A549 (cell line): ENCODE measurements at regions of chr2 and their contacts with region 1.

Region 1: GRCh38 chr2:70789304-70790135 is 923 bp downstream of the FIGLA start:
- DNase-seq: peak; percentile 78 to 85
- ATAC-seq: peak; percentile 86 to 96
- H3K4me3 ChIP-seq: peak overlapping the region; percentile 45
- H3K27ac ChIP-seq: 0 out of 6 replicates have a peak overlapping the region, but pooled peaks of 1 of the 2 experiments have one; percentile 11
- H3K4me1 ChIP-seq: peaks cover 7% of the 10 kb centered on the region; the same call in 1 of the 3 replicates
- CTCF ChIP-seq: peak; percentile 98
- EP300 ChIP-seq: no peak
- POLR2A ChIP-seq: no peak
- RAD21 ChIP-seq: peak; percentile 90 to 94

Region 2: GRCh38 chr2:70258532-70258874 is 531.0 kb before region 1 on chr2:
- CTCF ChIA-PET with region 1: no interaction called
- POLR2A ChIA-PET with region 1: no interaction called
- DNase-seq: peak in 1 of 2 experiments; percentile 34
- ATAC-seq: peak in 1 of 2 experiments; percentile 36; a peak in 5 of 6 replicates
- H3K4me3 ChIP-seq: peak overlapping the region; percentile 66
- H3K27ac ChIP-seq: peak overlapping the region; percentile 86 to 93
- H3K4me1 ChIP-seq: peaks cover 5% of the 10 kb centered on the region; the same call in 1 of the 3 replicates
- CTCF ChIP-seq: no peak
- EP300 ChIP-seq: no peak
- POLR2A ChIP-seq: no peak
- RAD21 ChIP-seq: no peak

Region 3: DNA sequence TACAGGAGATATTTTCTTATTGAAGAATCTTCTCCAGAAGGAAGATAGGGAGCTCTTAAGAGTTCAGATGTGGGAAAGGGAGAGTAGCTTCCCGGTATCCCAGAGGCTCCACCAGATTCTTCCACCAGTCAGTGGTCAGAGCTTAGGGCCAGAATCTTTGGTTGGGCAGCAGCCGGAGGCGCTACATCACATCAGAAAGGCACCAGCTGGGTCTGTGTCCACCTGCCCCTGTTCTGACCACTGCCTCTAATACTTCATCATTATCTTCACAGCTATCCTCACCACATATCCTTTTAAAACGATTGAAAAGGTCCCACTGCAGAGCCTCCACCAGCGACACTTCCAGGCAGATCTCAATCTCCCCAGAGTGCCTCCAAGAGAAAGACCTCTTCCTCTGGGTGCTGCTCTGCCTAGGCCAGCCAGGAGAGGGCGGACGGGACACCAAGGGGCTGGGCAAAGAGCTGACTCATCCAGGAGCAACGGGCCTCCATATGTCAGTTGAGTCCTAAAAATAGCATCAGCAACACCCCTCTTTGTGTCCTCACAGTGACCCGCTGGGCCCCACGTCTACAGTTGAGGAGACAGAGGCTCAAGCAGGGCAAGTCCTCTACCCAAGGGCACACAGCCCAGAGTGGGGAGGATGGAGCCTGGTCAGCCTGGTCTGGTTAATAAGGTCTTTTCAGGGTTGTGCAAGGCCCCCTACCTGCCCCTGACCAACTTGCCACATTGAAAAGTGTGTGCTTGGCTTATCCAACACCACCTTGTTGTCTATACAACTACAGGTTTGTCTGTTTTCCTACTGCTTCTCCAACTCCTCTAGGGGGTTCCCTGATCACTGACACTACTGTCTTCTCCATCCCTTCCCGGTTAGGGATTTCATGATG is 102.7 kb before region 1 on chr2:
- CTCF ChIA-PET with region 1: interaction called, 38 read pairs
- POLR2A ChIA-PET with region 1: no interaction called
- DNase-seq: peak; percentile 86 to 93
- ATAC-seq: peak; percentile 97 to 100
- H3K4me3 ChIP-seq: no peak overlapping the region
- H3K27ac ChIP-seq: peak overlapping the region; percentile 59 to 80; a peak in 5 of 6 replicates
- H3K4me1 ChIP-seq: peaks cover 7% of the 10 kb centered on the region
- CTCF ChIP-seq: peak; percentile 58
- EP300 ChIP-seq: no peak
- POLR2A ChIP-seq: no peak
- RAD21 ChIP-seq: peak; percentile 39 to 51; a peak in 3 of 5 replicates

Region 4: DNA sequence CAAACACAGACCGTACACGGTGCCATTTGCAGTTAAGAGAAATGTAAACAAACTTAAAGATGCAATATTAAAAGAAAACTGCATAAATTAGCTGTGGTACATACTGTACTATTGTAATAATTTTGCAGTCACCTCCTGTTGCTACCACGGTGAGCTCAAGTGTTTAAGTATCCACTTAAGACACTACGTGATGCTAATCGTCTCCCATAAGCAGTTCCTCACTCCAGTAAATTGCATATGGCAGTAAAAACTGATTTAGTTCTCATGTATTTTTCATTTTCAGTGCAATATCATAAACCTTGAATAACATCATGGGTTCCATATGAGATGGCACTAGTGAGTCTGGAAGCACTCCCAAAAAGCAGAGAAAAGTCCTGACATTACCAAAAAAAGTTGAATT is 16.5 kb after region 1 on chr2:
- CTCF ChIA-PET with region 1: interaction called, 21 read pairs
- POLR2A ChIA-PET with region 1: interaction called, 3 read pairs
- DNase-seq: no peak
- ATAC-seq: no peak
- H3K4me3 ChIP-seq: no peak overlapping the region
- H3K27ac ChIP-seq: no peak overlapping the region
- H3K4me1 ChIP-seq: no peaks in the 10 kb centered on the region
- CTCF ChIP-seq: no peak
- EP300 ChIP-seq: no peak
- POLR2A ChIP-seq: no peak
- RAD21 ChIP-seq: no peak

Region 5: DNA sequence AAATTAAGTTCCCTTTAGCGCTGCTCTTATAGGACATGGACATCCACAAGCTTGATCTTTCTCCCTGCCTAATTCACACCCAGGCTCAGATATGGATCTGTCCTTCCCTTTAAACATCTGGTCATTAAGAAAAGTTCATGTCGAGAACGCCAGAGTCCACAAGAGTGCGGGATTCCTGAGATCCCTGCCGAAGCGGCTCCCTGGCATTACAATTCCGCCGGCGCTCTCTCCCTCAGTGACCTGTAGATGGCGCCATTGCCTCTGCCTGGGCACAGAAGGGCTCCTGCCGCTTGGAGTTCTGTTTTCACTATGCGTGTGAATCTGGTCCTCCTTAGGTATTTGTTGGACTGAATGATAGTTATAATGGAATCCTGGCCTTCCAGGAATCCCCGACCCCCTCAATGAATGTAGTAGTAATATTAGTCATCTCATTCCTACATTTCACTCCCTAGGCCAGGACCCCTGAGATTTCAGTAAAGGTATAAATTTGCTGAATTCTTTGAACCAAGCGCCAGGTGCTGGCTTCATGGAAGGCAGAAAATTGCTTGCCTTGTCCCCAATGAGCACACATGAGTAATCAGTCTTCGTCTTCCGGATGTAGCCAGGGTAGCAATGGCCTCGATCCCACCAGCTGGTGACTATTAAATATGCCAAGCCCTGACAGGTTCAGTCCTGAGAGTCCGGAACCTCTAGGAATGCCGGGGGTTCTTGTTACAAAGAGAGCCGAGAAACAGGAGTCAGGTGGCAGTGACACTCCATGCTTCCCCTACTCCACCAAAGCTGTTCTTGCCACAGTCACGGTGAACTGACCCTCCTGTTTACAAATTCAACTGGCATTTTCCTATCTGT is 72.5 kb after region 1 on chr2:
- CTCF ChIA-PET with region 1: interaction called, 147 read pairs
- POLR2A ChIA-PET with region 1: no interaction called
- DNase-seq: peak; percentile 85 to 92
- ATAC-seq: peak; percentile 90 to 97
- H3K4me3 ChIP-seq: no peak overlapping the region
- H3K27ac ChIP-seq: no peak overlapping the region
- H3K4me1 ChIP-seq: peaks cover 3% of the 10 kb centered on the region; the same call in 1 of the 3 replicates
- CTCF ChIP-seq: peak; percentile 98
- EP300 ChIP-seq: no peak
- POLR2A ChIP-seq: no peak
- RAD21 ChIP-seq: peak; percentile 91 to 95

Region 6: DNA sequence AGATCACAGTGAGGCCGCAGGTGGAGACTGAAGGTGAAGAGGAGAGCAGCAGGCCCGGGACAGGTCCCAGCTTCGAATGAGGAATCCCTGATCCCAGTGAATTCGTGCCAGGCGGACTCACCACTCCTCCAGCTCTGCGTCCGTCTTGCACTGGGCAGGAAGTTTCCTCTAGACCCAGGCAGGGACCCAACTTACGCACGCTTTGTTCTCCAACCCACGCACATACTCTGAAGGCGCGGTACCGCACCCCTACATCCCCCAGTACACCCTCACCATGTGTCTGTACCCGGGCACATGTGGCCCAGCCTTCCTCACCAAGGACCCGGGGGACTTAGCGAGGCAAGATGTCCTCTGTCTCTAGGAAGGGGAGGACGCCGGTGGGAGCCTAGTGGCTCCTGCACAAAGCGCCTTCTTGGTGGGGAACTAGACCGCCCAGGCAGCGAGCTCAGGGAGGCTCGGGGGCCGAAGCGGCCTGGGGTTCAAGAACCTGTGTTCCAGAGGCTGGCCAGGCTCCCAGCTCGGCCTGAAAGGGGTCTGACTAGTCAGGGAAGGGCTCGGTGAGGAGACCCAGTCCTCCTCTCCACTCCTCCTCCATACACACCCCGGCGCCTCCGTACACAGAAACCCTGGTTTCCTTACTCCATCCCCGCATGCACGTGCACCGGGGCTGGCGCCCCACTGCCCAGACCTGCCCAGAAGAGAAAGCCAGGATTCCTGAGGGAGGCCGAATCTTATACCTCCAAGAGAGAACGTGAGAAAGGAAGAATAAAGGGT is 107.9 kb after region 1 on chr2:
- CTCF ChIA-PET with region 1: interaction called, 11 read pairs
- POLR2A ChIA-PET with region 1: no interaction called
- DNase-seq: no peak
- ATAC-seq: no peak
- H3K4me3 ChIP-seq: no peak overlapping the region
- H3K27ac ChIP-seq: no peak overlapping the region
- H3K4me1 ChIP-seq: peaks cover 5% of the 10 kb centered on the region
- CTCF ChIP-seq: no peak
- EP300 ChIP-seq: no peak
- POLR2A ChIP-seq: no peak
- RAD21 ChIP-seq: no peak

Region 7: DNA sequence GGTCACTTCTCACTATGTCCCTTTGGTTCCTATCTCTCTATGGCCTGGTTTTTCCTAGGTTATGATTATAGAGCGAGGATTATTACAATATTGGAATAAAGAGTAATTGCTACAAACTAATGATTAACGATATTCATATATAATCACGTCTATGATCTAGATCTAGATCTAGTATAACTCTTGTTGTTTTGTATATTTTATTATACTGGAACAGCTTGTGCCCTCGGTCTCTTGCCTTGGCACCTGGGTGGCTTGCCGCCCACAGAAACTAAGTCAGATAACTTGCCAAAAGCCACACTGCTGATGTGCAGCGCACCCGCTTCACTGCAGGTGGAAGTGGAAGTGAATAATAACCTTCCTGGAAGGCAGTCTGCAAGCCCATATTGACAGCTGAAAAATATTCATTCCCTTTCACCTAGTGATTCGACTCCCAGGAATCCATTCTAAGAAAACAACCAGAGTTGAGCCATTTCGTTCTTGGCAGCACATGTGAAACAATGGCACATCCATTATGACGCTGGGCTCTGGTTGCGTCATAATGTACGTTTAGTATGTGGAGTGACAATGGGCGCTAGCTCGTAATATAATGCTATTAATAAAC is 188.2 kb after region 1 on chr2:
- CTCF ChIA-PET with region 1: interaction called, 13 read pairs
- POLR2A ChIA-PET with region 1: no interaction called
- DNase-seq: no peak
- ATAC-seq: no peak
- H3K4me3 ChIP-seq: peak overlapping the region; percentile 55; the same call in 1 of the 3 replicates
- H3K27ac ChIP-seq: no peak overlapping the region
- H3K4me1 ChIP-seq: peaks cover 8% of the 10 kb centered on the region; the same call in 1 of the 3 replicates
- CTCF ChIP-seq: no peak; the same call in 1 of the 3 replicates
- EP300 ChIP-seq: no peak
- POLR2A ChIP-seq: no peak
- RAD21 ChIP-seq: no peak

Region 8: GRCh38 chr2:71000780-71001591 is 211.5 kb after region 1 on chr2:
- CTCF ChIA-PET with region 1: interaction called, 15 read pairs
- POLR2A ChIA-PET with region 1: no interaction called
- DNase-seq: peak; percentile 59 to 80
- ATAC-seq: peak; percentile 86 to 93
- H3K4me3 ChIP-seq: peak overlapping the region; percentile 42
- H3K27ac ChIP-seq: peak overlapping the region; percentile 64 to 83
- H3K4me1 ChIP-seq: peaks cover 5% of the 10 kb centered on the region; the same call in 1 of the 3 replicates
- CTCF ChIP-seq: peak; percentile 94
- EP300 ChIP-seq: no peak
- POLR2A ChIP-seq: peak; percentile 25; the same call in 1 of the 2 replicates
- RAD21 ChIP-seq: peak; percentile 41 to 43; a peak in 4 of 5 replicates